Dendritic cell treated with granulocyte-macrophage colony-stimulating factor and Interleukin-4, amounts not matched to agents 40 ng/mL and 50 ng/mL, for 4 days (primary cell): ENCODE measurements at regions of chr17 and their contacts with region 1.

Region 1: GRCh38 chr17:28112220-28113005 is 69.9 kb downstream of the NLK start:
- H3K4me3 Mint-ChIP-seq: no peak overlapping the region
- H3K27ac Mint-ChIP-seq: peak overlapping the region; percentile 81
- H3K4me1 Mint-ChIP-seq: peaks cover 29% of the 10 kb centered on the region
- H3K27me3 Mint-ChIP-seq: no peaks in the 10 kb centered on the region

Region 2: DNA sequence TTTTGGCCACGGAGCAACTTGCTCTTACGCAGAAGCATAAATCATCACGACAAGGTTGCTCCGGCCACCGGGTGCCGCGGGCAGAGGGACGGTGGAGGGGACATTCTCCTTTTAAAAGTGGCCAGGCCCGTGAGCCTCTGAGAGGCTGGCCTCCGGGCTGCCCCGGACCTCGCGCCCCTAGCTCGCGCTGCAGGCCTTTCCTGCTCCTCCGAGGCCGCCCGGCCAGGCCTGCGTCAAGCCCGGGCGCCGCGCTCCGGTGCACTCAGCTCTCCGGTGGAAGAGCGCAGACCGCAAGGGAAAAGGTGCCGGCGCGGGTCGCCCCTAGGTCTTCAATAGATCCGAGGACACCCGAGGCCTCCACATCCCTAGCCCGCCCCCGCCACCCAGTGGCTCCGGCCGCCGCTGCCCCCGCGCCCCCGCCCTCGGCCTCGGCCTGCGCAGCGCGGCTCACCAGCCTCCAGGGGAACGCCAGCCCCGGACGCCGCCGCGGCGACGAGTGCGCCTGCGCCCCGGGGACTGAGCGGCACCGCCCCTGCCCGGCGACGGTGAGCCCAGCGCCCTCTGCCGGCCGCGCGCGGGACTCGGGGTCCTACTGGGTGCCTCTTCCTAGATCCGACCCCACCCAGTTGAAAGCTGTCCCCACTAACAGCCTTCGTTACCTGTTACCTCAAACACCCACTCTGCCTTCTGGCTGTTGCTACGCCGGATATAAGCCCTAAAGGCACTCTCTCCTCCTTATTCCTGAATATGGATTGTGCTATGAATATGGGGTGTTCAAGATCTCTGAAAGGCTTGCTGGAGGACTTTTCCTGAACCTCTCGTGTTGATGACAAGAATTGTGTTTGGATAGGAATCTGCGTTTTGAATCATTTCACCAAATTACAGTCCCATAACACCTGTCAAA is 219.3 kb before region 1 on chr17 and contains the start of gene LYRM9:
- intact Hi-C with region 1: loop called (anchors 10 kb)
- H3K4me3 Mint-ChIP-seq: peak within 1 kb of the TSS; percentile 74
- H3K27ac Mint-ChIP-seq: peak within 1 kb of the TSS; percentile 79
- H3K4me1 Mint-ChIP-seq: peaks cover 26% of the 10 kb centered on the region
- H3K27me3 Mint-ChIP-seq: no peaks in the 10 kb centered on the region

Region 3: DNA sequence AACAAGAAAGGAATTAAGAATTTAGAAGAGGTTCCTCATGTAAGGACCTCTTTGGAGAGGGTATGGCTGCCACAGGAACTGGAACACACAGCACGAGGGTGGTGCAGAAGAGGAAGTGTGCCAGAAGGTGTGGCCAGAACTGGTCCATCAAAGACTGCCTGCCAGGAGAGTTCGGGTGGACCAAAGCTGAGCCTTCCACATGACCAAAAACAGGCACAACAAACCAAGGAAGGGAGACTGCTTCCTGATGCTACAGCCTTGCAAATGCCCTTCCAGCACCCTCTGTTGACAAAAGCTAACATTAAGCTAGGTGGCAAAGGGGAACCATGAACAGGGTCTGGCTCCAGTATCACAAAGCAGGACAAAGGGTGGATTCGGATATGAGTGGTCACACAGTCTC is 80.8 kb after region 1 on chr17:
- intact Hi-C with region 1: loop called (anchors 10 kb)
- H3K4me3 Mint-ChIP-seq: no peak overlapping the region
- H3K27ac Mint-ChIP-seq: peak overlapping the region; percentile 79
- H3K4me1 Mint-ChIP-seq: peaks cover 44% of the 10 kb centered on the region
- H3K27me3 Mint-ChIP-seq: no peaks in the 10 kb centered on the region